ENCODE measurements at regions of chr12 and their contacts with region 1.

Region 1: GRCh38 chr12:53743266-53744129 is 8.3 kb downstream of the CISTR start:
- DNase-seq: peak; percentile 84
- H3K4me3 ChIP-seq: peak overlapping the region in 2 of 8 donors; percentile 2 to 21
- H3K27ac ChIP-seq: no peak overlapping the region
- H3K4me1 ChIP-seq: peaks cover 15 to 55% (median 36%) of the 10 kb centered on the region in 6 donors
- H3K27me3 ChIP-seq: peaks cover 5 to 98% (median 44%) of the 10 kb centered on the region in 7 donors
- CTCF ChIP-seq: peak; percentile 90 to 98 (median 96)
- POLR2A ChIP-seq: no peak

Region 2: DNA sequence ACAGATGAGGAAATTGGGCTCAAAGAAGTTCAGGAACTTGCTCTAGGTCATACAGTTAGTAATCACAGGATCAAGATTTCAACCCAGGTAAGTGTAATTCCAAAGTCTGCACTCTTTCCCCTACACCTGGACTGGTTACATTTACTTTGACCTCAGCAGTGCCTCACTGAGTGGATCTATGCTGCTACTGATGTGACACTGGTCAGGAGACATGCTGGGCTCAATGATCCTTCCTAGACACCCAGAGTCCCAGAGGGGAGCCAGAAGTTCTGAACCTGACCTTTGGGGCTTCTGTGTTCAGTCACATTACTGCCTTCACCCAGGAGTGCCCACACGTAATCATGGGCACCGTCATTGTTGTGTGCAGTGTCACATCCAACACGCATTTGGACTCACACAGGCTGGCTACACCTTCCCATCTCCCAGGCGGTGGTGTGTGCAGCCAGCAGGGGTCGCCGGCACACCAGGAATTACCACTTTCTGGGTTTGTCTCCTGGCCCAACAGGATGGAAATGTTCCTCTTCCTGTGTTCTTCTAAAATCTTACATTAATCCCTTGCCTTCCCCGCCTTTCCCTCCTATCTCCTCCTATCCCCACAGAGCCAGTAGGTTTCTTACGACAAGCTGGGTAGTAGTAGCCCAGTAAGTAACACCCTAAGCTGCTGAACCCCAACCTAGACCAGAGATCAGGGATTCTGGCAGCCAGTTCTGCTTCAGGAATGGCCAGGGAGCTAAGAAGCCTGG is 41.8 kb before region 1 on chr12:
- intact Hi-C with region 1: loop called (anchors 2 kb)
- DNase-seq: peak; percentile 91
- H3K4me3 ChIP-seq: no peak overlapping the region
- H3K27ac ChIP-seq: no peak overlapping the region
- H3K4me1 ChIP-seq: peaks cover 0 to 9% (median 5%) of the 10 kb centered on the region in 6 donors
- H3K27me3 ChIP-seq: peaks cover 0 to 100% (median 48%) of the 10 kb centered on the region in 7 donors
- CTCF ChIP-seq: peak; percentile 68 to 94 (median 89)
- POLR2A ChIP-seq: no peak

Measured in spleen (tissue), 13 donors.